Caco-2 (cell line): ENCODE measurements at regions of chr2 and their contacts with region 1.

Region 1: DNA sequence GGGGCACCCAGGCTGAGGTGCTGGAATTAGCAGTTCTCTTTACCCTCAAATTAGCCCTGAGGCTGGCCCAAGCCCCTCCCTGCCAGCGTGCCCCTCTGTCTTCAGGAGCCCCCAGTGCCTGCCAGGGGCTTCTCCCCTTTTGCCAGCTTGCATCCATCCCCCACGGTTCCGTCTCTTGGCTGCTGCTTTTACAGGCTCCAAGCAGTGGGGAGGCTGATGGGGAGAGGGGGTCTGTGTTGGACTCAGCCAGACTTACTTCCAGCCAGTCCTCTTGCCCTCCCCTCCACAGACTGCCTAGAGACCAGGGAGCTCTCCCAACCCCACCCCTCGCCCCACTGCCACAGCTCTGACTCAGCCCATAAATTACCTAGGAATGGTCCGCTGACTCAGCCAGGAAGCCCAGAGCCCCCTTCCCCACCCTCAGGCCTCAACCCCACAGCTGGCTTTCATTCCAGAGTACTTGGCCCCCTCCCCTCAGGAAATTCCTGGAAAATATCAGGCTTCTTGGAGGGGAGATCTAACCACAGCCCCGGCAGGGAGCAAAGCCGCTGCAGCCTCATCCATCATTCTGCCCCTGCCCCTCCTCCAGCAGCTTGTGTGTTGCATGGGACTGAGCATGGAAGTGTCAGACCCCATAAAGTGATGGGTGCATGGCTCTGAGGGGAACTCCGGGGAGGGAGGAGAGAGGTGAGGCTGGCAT is 184.6 kb downstream of the ZFP36L2 start:
- DNase-seq: peak; percentile 79 to 93
- H3K4me3 ChIP-seq: no peak overlapping the region
- H3K4me3 Mint-ChIP-seq: peak overlapping the region; percentile 35
- H3K27ac Mint-ChIP-seq: peak overlapping the region; percentile 99
- H3K4me1 ChIP-seq: peaks cover 89% of the 10 kb centered on the region
- H3K4me1 Mint-ChIP-seq: peaks cover 48% of the 10 kb centered on the region
- H3K27me3 ChIP-seq: no peaks in the 10 kb centered on the region
- H3K27me3 Mint-ChIP-seq: no peaks in the 10 kb centered on the region
- CTCF ChIP-seq: no peak

Region 2: GRCh38 chr2:43024515-43025011 is 17.2 kb before region 1 on chr2:
- CTCF ChIA-PET with region 1: interaction called, 4 read pairs
- POLR2A ChIA-PET with region 1: no interaction called
- intact Hi-C with region 1: loop called (anchors 2 kb)
- DNase-seq: peak; percentile 77 to 82
- H3K4me3 ChIP-seq: no peak overlapping the region
- H3K4me3 Mint-ChIP-seq: no peak overlapping the region
- H3K27ac Mint-ChIP-seq: peak overlapping the region; percentile 36
- H3K4me1 ChIP-seq: peaks cover 38% of the 10 kb centered on the region
- H3K4me1 Mint-ChIP-seq: peaks cover 34% of the 10 kb centered on the region
- H3K27me3 ChIP-seq: no peaks in the 10 kb centered on the region
- H3K27me3 Mint-ChIP-seq: no peaks in the 10 kb centered on the region
- CTCF ChIP-seq: peak; percentile 77 to 92

Region 3: DNA sequence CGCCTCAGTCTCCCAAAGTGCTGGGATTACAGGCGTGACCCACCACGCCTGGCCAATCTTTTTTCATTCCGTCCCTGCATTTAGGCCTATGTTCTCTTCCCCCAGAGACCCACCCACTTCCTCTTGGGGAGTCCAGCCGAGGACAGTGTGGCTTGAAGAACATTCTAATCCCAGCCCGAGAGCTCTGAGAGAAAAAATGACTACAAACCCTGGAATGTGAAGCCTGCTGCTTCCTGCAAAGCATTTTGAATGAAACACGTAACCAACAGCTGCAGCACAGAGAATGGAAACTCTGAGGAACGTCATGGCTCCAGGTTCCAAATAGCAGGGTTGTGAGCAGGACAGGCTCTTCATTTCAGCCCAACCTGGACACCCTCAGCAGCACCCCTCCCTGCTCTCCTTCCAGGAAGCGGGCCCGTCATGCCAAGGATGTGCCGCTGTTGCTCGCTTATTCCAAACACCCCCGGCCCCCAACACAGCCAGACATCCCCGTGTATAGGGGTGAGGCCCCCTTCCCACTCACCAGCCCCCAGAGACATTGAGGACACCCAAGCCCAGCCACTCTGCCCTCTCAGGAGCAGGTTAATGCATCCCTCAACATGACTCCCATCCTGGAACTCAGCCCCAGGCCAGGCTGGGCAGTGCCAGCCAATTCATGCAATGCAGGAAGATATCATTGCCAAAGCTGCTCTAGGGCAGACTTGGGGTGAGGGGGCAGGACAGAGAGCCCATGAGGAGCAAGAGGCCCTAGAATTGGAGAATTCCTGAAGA is 44.8 kb after region 1 on chr2:
- CTCF ChIA-PET with region 1: no interaction called
- POLR2A ChIA-PET with region 1: no interaction called
- intact Hi-C with region 1: loop called (anchors 2 kb)
- DNase-seq: peak in 1 of 2 experiments; percentile 21
- H3K4me3 ChIP-seq: no peak overlapping the region
- H3K4me3 Mint-ChIP-seq: no peak overlapping the region
- H3K27ac Mint-ChIP-seq: peak overlapping the region; percentile 89
- H3K4me1 ChIP-seq: peaks cover 68% of the 10 kb centered on the region
- H3K4me1 Mint-ChIP-seq: peaks cover 54% of the 10 kb centered on the region
- H3K27me3 ChIP-seq: no peaks in the 10 kb centered on the region
- H3K27me3 Mint-ChIP-seq: no peaks in the 10 kb centered on the region
- CTCF ChIP-seq: no peak

Region 4: GRCh38 chr2:43110442-43110871 is 68.6 kb after region 1 on chr2:
- CTCF ChIA-PET with region 1: no interaction called
- POLR2A ChIA-PET with region 1: no interaction called
- intact Hi-C with region 1: loop called (anchors 5 kb)
- DNase-seq: peak; percentile 36 to 64
- H3K4me3 ChIP-seq: no peak overlapping the region
- H3K4me3 Mint-ChIP-seq: no peak overlapping the region
- H3K27ac Mint-ChIP-seq: no peak overlapping the region
- H3K4me1 ChIP-seq: peaks cover 34% of the 10 kb centered on the region
- H3K4me1 Mint-ChIP-seq: peaks cover 48% of the 10 kb centered on the region
- H3K27me3 ChIP-seq: no peaks in the 10 kb centered on the region; the same call in 1 of the 2 replicates
- H3K27me3 Mint-ChIP-seq: no peaks in the 10 kb centered on the region
- CTCF ChIP-seq: no peak

Region 5: DNA sequence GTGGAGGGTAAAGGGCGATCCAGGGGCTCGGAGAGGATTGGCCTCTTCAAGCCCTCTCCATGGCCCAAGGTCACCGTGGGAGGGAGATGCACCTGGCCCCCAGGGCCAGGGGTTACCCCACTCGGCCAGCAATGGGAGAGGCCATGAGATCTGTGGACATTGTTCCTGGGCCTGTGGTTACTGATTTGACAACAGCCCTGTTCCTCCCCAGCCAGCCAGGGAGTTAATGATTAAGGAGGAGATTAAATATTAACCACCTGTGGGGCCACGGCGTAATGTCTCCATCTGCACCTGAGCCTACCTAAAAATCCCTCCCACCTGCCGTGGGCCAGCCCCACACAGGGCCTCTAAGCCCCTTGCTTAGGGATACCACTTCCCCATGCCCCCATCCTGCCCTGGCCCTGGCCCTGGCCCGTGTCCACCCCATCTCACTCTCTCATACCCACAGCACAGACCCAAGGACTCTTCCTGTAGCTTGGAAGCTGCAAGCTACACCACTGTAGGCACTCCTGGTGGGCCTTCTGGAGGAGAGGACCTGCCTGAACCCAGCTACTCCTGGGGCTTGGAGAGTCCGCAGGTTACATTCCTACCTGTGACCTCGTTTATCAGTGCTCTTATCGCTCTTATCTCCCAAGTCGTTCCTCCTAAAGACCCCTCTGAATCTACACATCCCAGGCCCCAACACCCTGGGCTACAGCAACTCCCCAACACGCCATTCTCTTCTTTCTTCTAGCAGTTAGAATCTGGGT is 152.5 kb after region 1 on chr2:
- CTCF ChIA-PET with region 1: no interaction called
- POLR2A ChIA-PET with region 1: no interaction called
- intact Hi-C with region 1: loop called (anchors 1 kb)
- DNase-seq: peak; percentile 97 to 98
- H3K4me3 ChIP-seq: 0 out of 2 replicates have a peak overlapping the region, but pooled peaks have one; percentile 0
- H3K4me3 Mint-ChIP-seq: peak overlapping the region; percentile 67
- H3K27ac Mint-ChIP-seq: peak overlapping the region; percentile 91
- H3K4me1 ChIP-seq: peaks cover 86% of the 10 kb centered on the region
- H3K4me1 Mint-ChIP-seq: peaks cover 60% of the 10 kb centered on the region
- H3K27me3 ChIP-seq: no peaks in the 10 kb centered on the region
- H3K27me3 Mint-ChIP-seq: no peaks in the 10 kb centered on the region
- CTCF ChIP-seq: no peak

Region 6: GRCh38 chr2:43219383-43220228 is 177.8 kb after region 1 on chr2:
- CTCF ChIA-PET with region 1: no interaction called
- POLR2A ChIA-PET with region 1: no interaction called
- intact Hi-C with region 1: loop called (anchors 2 kb)
- DNase-seq: peak; percentile 91 to 92
- H3K4me3 ChIP-seq: peak overlapping the region; percentile 98
- H3K4me3 Mint-ChIP-seq: peak overlapping the region; percentile 70
- H3K27ac Mint-ChIP-seq: peak overlapping the region; percentile 76
- H3K4me1 ChIP-seq: peaks cover 40% of the 10 kb centered on the region
- H3K4me1 Mint-ChIP-seq: peaks cover 30% of the 10 kb centered on the region
- H3K27me3 ChIP-seq: no peaks in the 10 kb centered on the region
- H3K27me3 Mint-ChIP-seq: no peaks in the 10 kb centered on the region
- CTCF ChIP-seq: no peak